Activated CD4-positive, alpha-beta T cell treated with anti-CD3 and anti-CD28 coated beads, Interleukin-2, amount 10 ng/mL, durations not matched to agents 7 days and 5 days (primary cell): ENCODE measurements at regions of chr12 and their contacts with region 1.

Region 1: GRCh38 chr12:53500776-53501614 is at the start of gene TARBP2:
- DNase-seq: peak; percentile 99
- H3K4me3 Mint-ChIP-seq: peak within 1 kb of the TSS; percentile 89
- H3K27ac Mint-ChIP-seq: peak within 1 kb of the TSS; percentile 98
- H3K4me1 Mint-ChIP-seq: peaks cover 42% of the 10 kb centered on the region
- H3K27me3 Mint-ChIP-seq: no peaks in the 10 kb centered on the region
- total RNA-seq, gene TARBP2: 32.6 to 35.9 TPM

Region 2: GRCh38 chr12:53427905-53428594 is 72.9 kb before region 1 on chr12:
- CTCF ChIA-PET with region 1: no interaction called
- POLR2A ChIA-PET with region 1: no interaction called
- DNase-seq: no peak
- H3K4me3 Mint-ChIP-seq: no peak overlapping the region
- H3K27ac Mint-ChIP-seq: no peak overlapping the region
- H3K4me1 Mint-ChIP-seq: peaks cover 6% of the 10 kb centered on the region
- H3K27me3 Mint-ChIP-seq: peaks cover 2% of the 10 kb centered on the region

Region 3: GRCh38 chr12:53441040-53441833 is 59.8 kb before region 1 on chr12 and contains the start of gene PRR13:
- CTCF ChIA-PET with region 1: no interaction called
- POLR2A ChIA-PET with region 1: no interaction called
- DNase-seq: peak; percentile 100
- H3K4me3 Mint-ChIP-seq: peak within 1 kb of the TSS; percentile 89
- H3K27ac Mint-ChIP-seq: peak within 1 kb of the TSS; percentile 91
- H3K4me1 Mint-ChIP-seq: peaks cover 39% of the 10 kb centered on the region
- H3K27me3 Mint-ChIP-seq: no peaks in the 10 kb centered on the region
- total RNA-seq, gene PRR13: 223 to 229 TPM

Region 4: GRCh38 chr12:53518381-53518780 is 17.4 kb after region 1 on chr12:
- CTCF ChIA-PET with region 1: interaction called, 18 read pairs
- POLR2A ChIA-PET with region 1: interaction called, 3 read pairs
- DNase-seq: no peak
- H3K4me3 Mint-ChIP-seq: no peak overlapping the region
- H3K27ac Mint-ChIP-seq: no peak overlapping the region
- H3K4me1 Mint-ChIP-seq: peaks cover 6% of the 10 kb centered on the region
- H3K27me3 Mint-ChIP-seq: no peaks in the 10 kb centered on the region

Region 5: DNA sequence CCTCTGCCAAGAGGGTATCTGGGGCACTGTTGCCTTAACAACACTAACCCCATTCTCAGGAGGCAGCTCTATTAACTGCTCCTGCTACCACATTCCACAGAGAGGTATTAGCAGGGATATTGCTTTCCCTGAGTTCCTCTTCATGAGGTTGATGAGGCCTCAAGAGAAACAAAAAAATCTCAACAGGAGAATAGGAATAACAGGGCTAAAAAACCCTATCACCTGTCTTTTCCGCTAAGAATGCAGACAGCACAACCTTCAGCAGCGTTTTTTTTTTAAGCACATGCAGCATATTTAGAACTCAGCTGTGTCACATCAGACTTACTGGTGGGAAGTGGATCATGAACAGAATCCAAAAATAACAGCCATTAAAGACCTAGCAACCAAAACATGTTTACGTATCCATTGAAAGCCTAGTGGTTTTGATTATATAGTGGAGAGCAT is 95.9 kb after region 1 on chr12:
- CTCF ChIA-PET with region 1: no interaction called
- POLR2A ChIA-PET with region 1: no interaction called
- DNase-seq: no peak
- H3K4me3 Mint-ChIP-seq: no peak overlapping the region
- H3K27ac Mint-ChIP-seq: no peak overlapping the region
- H3K4me1 Mint-ChIP-seq: peaks cover 3% of the 10 kb centered on the region
- H3K27me3 Mint-ChIP-seq: no peaks in the 10 kb centered on the region

Region 6: GRCh38 chr12:53625946-53626701 is 125.1 kb after region 1 on chr12 and contains the start of gene ATF7:
- CTCF ChIA-PET with region 1: no interaction called
- POLR2A ChIA-PET with region 1: no interaction called
- DNase-seq: peak; percentile 98
- H3K4me3 Mint-ChIP-seq: peak within 1 kb of the TSS; percentile 100
- H3K27ac Mint-ChIP-seq: peak within 1 kb of the TSS; percentile 97
- H3K4me1 Mint-ChIP-seq: peaks cover 45% of the 10 kb centered on the region
- H3K27me3 Mint-ChIP-seq: no peaks in the 10 kb centered on the region
- total RNA-seq, gene ATF7: 28.6 to 43.0 TPM